SK-N-SH (cell line): ENCODE measurements at regions of chr11 and their contacts with region 1.

Region 1: DNA sequence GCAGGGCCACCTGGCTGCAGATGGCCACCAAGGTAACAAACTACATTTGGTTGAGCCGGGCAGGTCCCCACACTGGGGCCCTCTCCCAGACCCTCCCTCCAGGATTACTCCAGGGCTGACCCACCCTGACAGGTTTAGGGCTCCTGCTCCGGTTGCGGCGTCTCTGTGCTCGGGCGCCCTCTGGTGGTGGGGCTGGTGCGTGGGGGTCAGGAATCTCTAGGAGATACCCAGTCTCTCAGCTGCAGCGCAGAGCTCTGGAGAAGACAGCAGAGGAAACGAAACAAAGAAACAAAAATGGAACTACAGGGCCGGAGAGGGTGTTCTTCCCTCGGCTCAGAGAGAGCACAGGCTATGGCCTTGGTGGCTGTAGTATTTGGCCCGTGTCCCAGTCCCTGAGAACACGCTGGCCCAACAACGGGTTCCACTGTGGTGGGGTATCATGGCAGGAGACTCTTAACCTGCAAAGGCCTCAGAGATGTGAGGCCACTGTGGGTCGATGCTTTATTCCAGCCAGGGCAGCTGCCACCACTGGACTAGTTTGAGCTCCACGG is 2.4 kb downstream of the C11orf96 start:
- DNase-seq: peak; percentile 72
- H3K4me3 ChIP-seq: peak overlapping the region; percentile 26 to 53; a peak in 3 of 4 replicates
- H3K27ac ChIP-seq: peak overlapping the region in 1 of 2 experiments; percentile 93; a peak in 2 of 4 replicates
- H3K4me1 ChIP-seq: peaks cover 5 to 46% of the 10 kb centered on the region in 2 experiments; a peak in 3 of 4 replicates
- H3K27me3 ChIP-seq: peaks cover 62% of the 10 kb centered on the region
- CTCF ChIP-seq: peak; percentile 74
- EP300 ChIP-seq: no peak
- RAD21 ChIP-seq: peak; percentile 62

Region 2: DNA sequence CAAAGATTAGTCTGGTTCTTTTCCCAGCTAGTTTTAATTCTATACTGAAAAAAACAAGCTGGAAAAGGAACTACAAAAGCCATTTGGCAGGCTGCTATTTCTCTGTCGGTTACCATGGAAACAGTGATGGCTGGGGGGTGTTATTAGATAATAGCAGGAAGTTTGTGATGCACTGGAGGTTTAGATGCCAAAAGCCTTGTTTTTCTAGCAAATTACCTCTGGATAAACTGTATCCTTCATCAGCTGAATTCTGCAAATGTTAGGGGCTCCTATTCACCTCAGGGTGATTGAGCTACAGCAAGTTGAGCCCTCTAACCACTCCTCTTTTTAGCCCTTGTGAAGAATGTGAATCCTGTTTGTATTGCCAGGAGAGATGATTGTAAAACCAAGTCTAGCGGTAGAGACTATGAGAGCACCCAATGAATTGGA is 39.0 kb before region 1 on chr11:
- CTCF ChIA-PET with region 1: interaction called, 90 read pairs
- POLR2A ChIA-PET with region 1: interaction called, 47 read pairs
- DNase-seq: peak; percentile 73
- H3K4me3 ChIP-seq: no peak overlapping the region
- H3K27ac ChIP-seq: peak overlapping the region; percentile 51 to 100
- H3K4me1 ChIP-seq: peaks cover 0 to 50% of the 10 kb centered on the region in 2 experiments; a peak in 2 of 4 replicates
- H3K27me3 ChIP-seq: no peaks in the 10 kb centered on the region
- CTCF ChIP-seq: no peak
- EP300 ChIP-seq: peak in 1 of 2 experiments; percentile 96; a peak in 2 of 4 replicates
- RAD21 ChIP-seq: peak; percentile 14; the same call in 1 of the 2 replicates

Region 3: GRCh38 chr11:43920598-43921419 is 24.0 kb before region 1 on chr11:
- CTCF ChIA-PET with region 1: interaction called, 222 read pairs
- POLR2A ChIA-PET with region 1: interaction called, 213 read pairs
- DNase-seq: no peak
- H3K4me3 ChIP-seq: no peak overlapping the region
- H3K27ac ChIP-seq: peak overlapping the region; percentile 65 to 100
- H3K4me1 ChIP-seq: peaks cover 4 to 84% of the 10 kb centered on the region in 2 experiments; a peak in 3 of 4 replicates
- H3K27me3 ChIP-seq: no peaks in the 10 kb centered on the region
- CTCF ChIP-seq: no peak
- EP300 ChIP-seq: no peak
- RAD21 ChIP-seq: no peak

Region 4: DNA sequence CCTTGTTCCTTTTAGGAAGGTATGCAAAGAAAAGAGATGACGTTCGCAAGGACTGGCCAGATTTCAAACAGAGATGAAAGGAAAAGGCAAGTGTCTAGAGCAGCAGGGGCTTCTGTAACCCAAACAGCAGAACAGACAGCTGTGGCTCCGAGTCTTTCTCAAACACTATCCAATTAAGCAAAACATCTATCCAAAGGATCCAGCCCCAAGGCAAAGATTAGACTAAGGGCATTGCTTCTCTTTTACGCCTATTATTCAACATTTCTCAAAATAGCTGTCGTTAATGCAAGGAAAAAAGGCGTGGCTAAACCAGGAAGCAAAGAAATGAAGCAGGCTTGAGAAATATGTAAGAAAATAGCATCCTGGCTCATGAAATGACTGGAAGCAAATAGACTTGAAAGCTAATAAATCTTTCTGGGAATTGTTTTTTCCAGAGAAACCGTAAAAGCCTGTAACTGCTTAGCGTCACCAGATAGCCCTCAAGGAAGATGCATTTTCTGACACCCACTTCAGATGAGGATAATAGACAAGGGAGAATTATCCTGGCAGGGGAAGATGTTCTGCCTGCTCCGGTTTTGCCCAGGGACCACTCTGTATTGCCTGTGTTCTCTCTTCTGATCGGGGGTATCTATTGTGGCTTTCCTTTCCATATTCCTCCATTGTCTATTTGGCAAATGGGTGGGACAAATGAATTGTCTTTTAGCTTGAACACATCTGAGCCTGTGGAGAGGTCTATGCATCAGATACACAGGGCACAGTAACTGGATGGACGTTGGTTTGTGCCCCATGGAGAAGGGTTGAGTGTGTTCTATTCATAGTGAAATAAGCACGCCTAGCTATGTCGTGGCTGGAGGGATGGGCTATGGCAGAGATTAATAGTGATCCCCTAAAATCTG is 17.8 kb after region 1 on chr11:
- CTCF ChIA-PET with region 1: interaction called, 15 read pairs
- POLR2A ChIA-PET with region 1: interaction called, 24 read pairs
- DNase-seq: peak; percentile 60
- H3K4me3 ChIP-seq: peak overlapping the region in 1 of 2 experiments; percentile 9; a peak in 2 of 4 replicates
- H3K27ac ChIP-seq: peak overlapping the region in 1 of 2 experiments; percentile 90; a peak in 2 of 4 replicates
- H3K4me1 ChIP-seq: peaks cover 0 to 28% of the 10 kb centered on the region in 2 experiments; a peak in 3 of 4 replicates
- H3K27me3 ChIP-seq: no peaks in the 10 kb centered on the region
- CTCF ChIP-seq: no peak
- EP300 ChIP-seq: peak in 1 of 2 experiments; percentile 87; a peak in 2 of 4 replicates
- RAD21 ChIP-seq: 0 out of 2 replicates have a peak, but pooled peaks have one; percentile 16

Region 5: GRCh38 chr11:43987384-43988039 is 42.7 kb after region 1 on chr11:
- CTCF ChIA-PET with region 1: interaction called, 25 read pairs
- POLR2A ChIA-PET with region 1: interaction called, 53 read pairs
- DNase-seq: peak; percentile 88
- H3K4me3 ChIP-seq: peak overlapping the region in 1 of 2 experiments; percentile 15; a peak in 1 of 4 replicates
- H3K27ac ChIP-seq: peak overlapping the region; percentile 79 to 96
- H3K4me1 ChIP-seq: peaks cover 12 to 59% of the 10 kb centered on the region in 2 experiments; a peak in 3 of 4 replicates
- H3K27me3 ChIP-seq: peaks cover 8% of the 10 kb centered on the region; the same call in 1 of the 2 replicates
- CTCF ChIP-seq: no peak
- EP300 ChIP-seq: peak; percentile 45 to 80; a peak in 3 of 4 replicates
- RAD21 ChIP-seq: peak; percentile 41